ENCODE measurements at regions of chr1 and their contacts with region 1.

Region 1: DNA sequence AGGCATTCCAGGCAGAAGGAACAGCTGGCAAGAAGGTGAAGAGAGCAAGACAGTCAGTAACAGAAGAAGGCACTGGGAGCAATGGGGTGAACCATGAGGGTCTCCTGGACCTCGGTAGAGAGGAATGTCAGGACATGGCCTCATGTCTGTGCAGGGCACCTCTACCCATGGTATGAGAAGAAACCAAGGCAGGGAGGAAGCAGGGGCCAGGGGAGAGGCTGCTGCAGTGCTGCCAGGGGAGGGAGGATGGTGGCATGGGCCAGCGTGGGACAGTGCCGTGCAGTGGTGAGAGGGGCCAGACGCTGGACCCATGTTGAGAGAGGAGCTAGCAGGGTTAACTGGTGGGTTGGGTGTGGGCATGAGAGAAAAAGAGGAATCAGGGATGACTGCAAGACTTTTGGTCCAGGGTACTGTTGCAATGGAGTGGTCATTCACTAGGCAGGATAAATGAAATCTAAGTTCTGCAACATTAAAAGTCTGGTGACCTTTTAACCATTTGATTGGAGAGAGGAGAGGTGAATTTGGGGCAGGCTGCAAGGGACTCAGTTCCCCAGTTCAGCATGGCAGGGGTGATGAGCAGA is 577.6 kb downstream of the MATN1 start:
- DNase-seq: no peak
- H3K4me3 ChIP-seq: no peak overlapping the region
- H3K27ac ChIP-seq: no peak overlapping the region
- H3K4me1 ChIP-seq: no peaks in the 10 kb centered on the region
- H3K27me3 ChIP-seq: no peaks in the 10 kb centered on the region
- CTCF ChIP-seq: no peak

Region 2: GRCh38 chr1:30191154-30191702 is 45.4 kb after region 1 on chr1:
- CTCF ChIA-PET with region 1: no interaction called
- dilution Hi-C with region 1: loop called (anchors 5 kb)
- in situ Hi-C with region 1: no loop called
- intact Hi-C with region 1: no loop called
- DNase-seq: no peak
- H3K4me3 ChIP-seq: no peak overlapping the region
- H3K27ac ChIP-seq: no peak overlapping the region
- H3K4me1 ChIP-seq: no peaks in the 10 kb centered on the region
- H3K27me3 ChIP-seq: no peaks in the 10 kb centered on the region
- CTCF ChIP-seq: no peak